CD14-positive monocyte (primary cell): ENCODE measurements at regions of chr10 and their contacts with region 1.

Region 1: DNA sequence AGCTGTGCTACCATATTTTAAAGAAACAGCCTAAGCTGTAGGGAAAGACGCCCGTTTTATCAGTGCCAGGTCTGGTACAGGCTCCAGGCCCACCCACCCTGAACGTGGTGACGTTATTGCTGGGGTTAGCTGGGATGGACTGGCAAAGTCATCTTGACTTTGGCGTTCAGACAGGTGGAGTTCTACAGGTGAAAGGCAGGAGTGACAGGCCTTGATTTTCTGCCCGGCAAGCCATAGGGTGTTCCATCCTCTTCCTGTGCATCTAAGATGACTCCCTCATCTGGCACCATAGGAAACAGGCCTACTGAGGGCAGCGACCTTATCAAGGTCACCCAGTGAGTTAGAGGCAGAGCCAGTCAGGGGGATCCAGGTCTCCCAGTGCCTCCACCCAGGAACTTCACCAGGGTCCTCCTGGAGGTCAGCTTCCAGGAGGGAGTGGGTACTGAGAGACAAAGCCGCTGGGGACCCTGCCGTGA is 41.6 kb downstream of the HK1 start:
- DNase-seq: no peak
- H3K4me3 ChIP-seq: peak overlapping the region; percentile 88 to 100 (median 91)
- H3K4me3 Mint-ChIP-seq: peak overlapping the region; percentile 95 to 97
- H3K27ac ChIP-seq: peak overlapping the region; percentile 75 to 92
- H3K27ac Mint-ChIP-seq: peak overlapping the region; percentile 86 to 94 (median 92)
- H3K4me1 ChIP-seq: peaks cover 38 to 53% of the 10 kb centered on the region in 2 donors
- H3K4me1 Mint-ChIP-seq: peaks cover 50% of the 10 kb centered on the region
- H3K27me3 ChIP-seq: no peaks in the 10 kb centered on the region
- H3K27me3 Mint-ChIP-seq: peaks cover 2% of the 10 kb centered on the region in 3 donors
- CTCF ChIP-seq: no peak

Region 2: GRCh38 chr10:69359594-69359993 is 39.7 kb after region 1 on chr10:
- intact Hi-C with region 1: loop called in 1 of 2 experiments (anchors 5 kb)
- DNase-seq: no peak
- H3K4me3 ChIP-seq: peak overlapping the region in 1 of 3 experiments; percentile 56
- H3K4me3 Mint-ChIP-seq: peak overlapping the region; percentile 42 to 82
- H3K27ac ChIP-seq: peak overlapping the region; percentile 56 to 88
- H3K27ac Mint-ChIP-seq: peak overlapping the region; percentile 88 to 97 (median 90)
- H3K4me1 ChIP-seq: peaks cover 37 to 55% of the 10 kb centered on the region in 2 donors
- H3K4me1 Mint-ChIP-seq: peaks cover 43% of the 10 kb centered on the region
- H3K27me3 ChIP-seq: no peaks in the 10 kb centered on the region
- H3K27me3 Mint-ChIP-seq: no peaks in the 10 kb centered on the region
- CTCF ChIP-seq: no peak

Region 3: GRCh38 chr10:69408318-69409175 is 88.7 kb after region 1 on chr10:
- intact Hi-C with region 1: loop called in 1 of 2 experiments (anchors 2 kb)
- DNase-seq: peak; percentile 86 to 95 (median 91)
- H3K4me3 ChIP-seq: peak overlapping the region; percentile 31 to 69 (median 32)
- H3K4me3 Mint-ChIP-seq: peak overlapping the region; percentile 76 to 87
- H3K27ac ChIP-seq: peak overlapping the region; percentile 61 to 68
- H3K27ac Mint-ChIP-seq: peak overlapping the region; percentile 56 to 88 (median 81)
- H3K4me1 ChIP-seq: peaks cover 20% of the 10 kb centered on the region in 2 donors
- H3K4me1 Mint-ChIP-seq: peaks cover 22% of the 10 kb centered on the region
- H3K27me3 ChIP-seq: no peaks in the 10 kb centered on the region
- H3K27me3 Mint-ChIP-seq: peaks cover 0 to 8% (median 4%) of the 10 kb centered on the region in 3 donors
- CTCF ChIP-seq: peak; percentile 91